ENCODE measurements at regions of chr2 and their contacts with region 1.

Region 1: DNA sequence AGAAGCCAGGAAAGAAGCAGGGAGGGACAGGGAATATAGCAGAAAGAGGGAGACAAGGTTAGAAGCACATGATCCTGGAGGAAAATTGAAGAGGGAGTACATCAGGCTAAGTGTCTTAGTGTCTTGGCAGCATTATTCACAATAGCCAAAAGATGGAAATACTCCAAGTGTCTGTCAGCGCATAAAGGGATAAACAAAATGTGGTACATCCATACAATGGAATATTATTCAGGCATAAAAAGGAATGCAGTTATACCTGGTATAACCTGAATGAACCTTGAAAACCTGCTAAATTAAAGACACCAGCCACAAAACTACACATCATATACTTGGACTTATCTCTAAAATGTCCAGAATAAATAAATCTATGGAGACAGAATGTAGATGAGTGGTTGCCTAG is 219.1 kb upstream of the PID1 start:
- DNase-seq: no peak
- H3K4me3 ChIP-seq: no peak overlapping the region
- H3K27ac ChIP-seq: no peak overlapping the region
- H3K4me1 ChIP-seq: no peaks in the 10 kb centered on the region
- H3K27me3 ChIP-seq: no peaks in the 10 kb centered on the region
- CTCF ChIP-seq: no peak
- EP300 ChIP-seq: no peak
- POLR2A ChIP-seq: no peak

Region 2: DNA sequence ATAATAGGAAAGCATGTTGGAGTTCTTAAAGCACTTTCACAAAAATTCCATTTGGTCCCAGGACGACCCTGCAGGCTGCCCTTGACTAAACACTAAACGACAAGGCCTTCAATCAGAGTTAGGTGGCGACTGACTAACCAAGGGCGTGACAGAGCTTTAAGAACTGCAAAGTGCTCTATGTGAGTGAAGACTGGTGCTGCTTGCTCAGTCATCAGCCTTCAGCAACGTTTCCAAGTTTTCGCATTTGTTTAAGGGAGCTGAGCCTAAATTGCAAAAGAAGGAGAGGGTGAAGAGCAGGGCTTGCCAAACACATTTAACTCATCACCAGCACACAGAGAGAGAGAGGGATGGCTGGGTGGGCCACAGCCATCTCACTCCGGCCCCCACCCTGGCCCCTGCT is 14.4 kb before region 1 on chr2:
- intact Hi-C with region 1: loop called (anchors 2 kb)
- DNase-seq: no peak
- H3K4me3 ChIP-seq: no peak overlapping the region
- H3K27ac ChIP-seq: no peak overlapping the region
- H3K4me1 ChIP-seq: no peaks in the 10 kb centered on the region
- H3K27me3 ChIP-seq: no peaks in the 10 kb centered on the region
- CTCF ChIP-seq: no peak
- EP300 ChIP-seq: no peak
- POLR2A ChIP-seq: no peak